CD8-positive, alpha-beta T cell (primary cell): ENCODE measurements at regions of chr20 and their contacts with region 1.

Region 1: GRCh38 chr20:59159493-59160376 is 3.9 kb upstream of the ZNF831 start:
- DNase-seq: peak; percentile 56 to 97 (median 79)
- ATAC-seq: peak; percentile 86
- H3K4me3 ChIP-seq: peak overlapping the region; percentile 47 to 67
- H3K4me3 Mint-ChIP-seq: peak overlapping the region; percentile 83
- H3K27ac ChIP-seq: peak overlapping the region; percentile 79 to 93
- H3K27ac Mint-ChIP-seq: peak overlapping the region; percentile 98
- H3K4me1 ChIP-seq: peaks cover 69% of the 10 kb centered on the region
- H3K4me1 Mint-ChIP-seq: peaks cover 91% of the 10 kb centered on the region
- H3K27me3 ChIP-seq: no peaks in the 10 kb centered on the region
- H3K27me3 Mint-ChIP-seq: no peaks in the 10 kb centered on the region
- CTCF ChIP-seq: peak; percentile 23

Region 2: DNA sequence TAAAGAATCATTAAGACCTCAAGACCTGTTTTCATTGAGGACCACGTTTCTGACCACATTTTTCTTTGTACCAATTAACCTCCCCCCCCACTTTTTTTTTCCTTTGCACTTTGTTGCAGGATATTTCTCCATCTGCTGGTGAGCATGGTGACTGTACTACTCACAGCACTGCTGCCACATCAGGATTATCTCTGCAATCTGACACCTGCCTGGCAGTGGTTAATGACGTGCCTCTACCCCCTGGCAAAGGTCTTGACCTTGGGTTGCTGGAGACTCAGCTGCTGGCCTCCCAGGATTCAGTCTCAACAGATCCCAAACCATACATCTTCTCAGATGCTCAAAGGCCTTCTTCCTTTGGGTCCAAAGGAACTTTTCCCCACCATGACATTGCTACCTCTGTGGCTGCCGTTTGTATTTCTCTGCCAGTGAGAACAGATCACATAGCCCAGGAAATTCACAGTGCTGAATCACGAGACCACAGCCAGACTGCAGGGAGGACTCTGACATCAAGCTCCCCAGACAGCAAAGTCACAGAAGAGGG is 94.1 kb after region 1 on chr20:
- CTCF ChIA-PET with region 1: interaction called, 5 read pairs
- POLR2A ChIA-PET with region 1: interaction called, 7 read pairs
- intact Hi-C with region 1: loop called in 1 of 2 experiments (anchors 5 kb)
- DNase-seq: peak in 7 of 9 experiments; percentile 26 to 70 (median 40)
- ATAC-seq: peak; percentile 61
- H3K4me3 ChIP-seq: peak overlapping the region in 1 of 2 experiments; percentile 18
- H3K4me3 Mint-ChIP-seq: peak overlapping the region; percentile 75
- H3K27ac ChIP-seq: peak overlapping the region; percentile 57 to 59
- H3K27ac Mint-ChIP-seq: peak overlapping the region; percentile 98
- H3K4me1 ChIP-seq: peaks cover 53% of the 10 kb centered on the region
- H3K4me1 Mint-ChIP-seq: peaks cover 74% of the 10 kb centered on the region
- H3K27me3 ChIP-seq: no peaks in the 10 kb centered on the region
- H3K27me3 Mint-ChIP-seq: no peaks in the 10 kb centered on the region
- CTCF ChIP-seq: no peak